MCF 10A (cell line): ENCODE measurements at regions of chr1 and their contacts with region 1.

Region 1: GRCh38 chr1:101520302-101520701 is 283.5 kb downstream of the S1PR1 start:
- DNase-seq: peak; percentile 65
- H3K4me3 Mint-ChIP-seq: no peak overlapping the region
- H3K27ac Mint-ChIP-seq: no peak overlapping the region
- H3K4me1 Mint-ChIP-seq: no peaks in the 10 kb centered on the region
- H3K27me3 Mint-ChIP-seq: peaks cover 48% of the 10 kb centered on the region
- CTCF ChIP-seq: peak; percentile 84

Region 2: DNA sequence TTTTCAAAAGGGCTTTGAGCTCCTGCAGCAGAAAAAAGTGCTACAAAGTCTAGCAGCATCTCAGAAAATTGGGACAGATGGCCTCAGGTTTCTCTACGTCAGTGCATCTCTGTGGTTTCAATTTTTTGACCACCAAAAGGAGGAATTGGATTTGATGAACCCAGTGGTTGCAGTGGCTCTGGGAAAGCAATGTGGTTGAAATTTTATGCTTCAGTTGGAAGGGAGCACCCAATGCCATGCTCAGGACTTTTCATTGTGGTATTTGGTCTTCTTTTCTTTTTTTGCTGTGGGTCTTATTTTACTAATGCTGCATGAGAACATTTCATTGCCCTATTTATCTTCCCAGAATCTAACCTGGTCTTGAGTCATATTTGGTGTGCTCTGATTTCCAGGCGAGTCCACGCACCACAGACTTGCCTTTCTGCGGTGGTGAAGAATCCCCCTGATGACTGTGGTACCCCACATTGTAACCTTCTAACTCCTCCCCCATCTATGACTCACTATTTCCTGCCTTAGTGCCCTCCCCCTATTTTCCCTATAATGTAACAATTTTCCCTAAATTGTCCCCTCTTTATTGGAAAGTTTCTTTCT is 226.7 kb before region 1 on chr1:
- CTCF ChIA-PET with region 1: no interaction called
- POLR2A ChIA-PET with region 1: no interaction called
- intact Hi-C with region 1: no loop called
- DNase-seq: no peak
- H3K4me3 Mint-ChIP-seq: no peak overlapping the region
- H3K27ac Mint-ChIP-seq: no peak overlapping the region
- H3K4me1 Mint-ChIP-seq: peaks cover 11% of the 10 kb centered on the region
- H3K27me3 Mint-ChIP-seq: peaks cover 11% of the 10 kb centered on the region
- CTCF ChIP-seq: no peak

Region 3: GRCh38 chr1:101465941-101466340 is 54.4 kb before region 1 on chr1:
- CTCF ChIA-PET with region 1: no interaction called
- POLR2A ChIA-PET with region 1: no interaction called
- intact Hi-C with region 1: no loop called
- DNase-seq: no peak
- H3K4me3 Mint-ChIP-seq: no peak overlapping the region
- H3K27ac Mint-ChIP-seq: no peak overlapping the region
- H3K4me1 Mint-ChIP-seq: no peaks in the 10 kb centered on the region
- H3K27me3 Mint-ChIP-seq: peaks cover 29% of the 10 kb centered on the region
- CTCF ChIP-seq: no peak

Region 4: DNA sequence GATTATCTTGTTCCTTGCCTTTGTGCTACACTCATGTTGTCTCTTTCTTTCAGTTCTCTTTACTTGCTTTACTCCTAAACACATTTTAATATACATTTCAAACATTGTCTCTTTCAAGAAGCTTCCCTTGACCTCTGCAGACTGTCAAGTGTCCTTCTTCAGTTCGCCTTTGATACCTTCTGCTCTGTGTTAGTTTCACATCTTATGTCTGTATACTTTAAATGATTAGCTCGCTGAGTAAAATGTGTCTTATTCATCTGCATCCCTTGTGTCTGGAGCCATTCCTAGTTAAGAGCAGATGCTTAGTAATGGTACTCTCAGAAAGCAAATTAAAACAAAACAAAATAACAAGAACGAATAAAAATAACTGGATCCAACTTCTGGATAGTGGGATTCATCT is 19.9 kb after region 1 on chr1:
- CTCF ChIA-PET with region 1: interaction called, 14 read pairs
- POLR2A ChIA-PET with region 1: no interaction called
- intact Hi-C with region 1: no loop called
- DNase-seq: no peak
- H3K4me3 Mint-ChIP-seq: no peak overlapping the region
- H3K27ac Mint-ChIP-seq: no peak overlapping the region
- H3K4me1 Mint-ChIP-seq: no peaks in the 10 kb centered on the region
- H3K27me3 Mint-ChIP-seq: peaks cover 54% of the 10 kb centered on the region
- CTCF ChIP-seq: no peak

Region 5: GRCh38 chr1:101653482-101653946 is 133.2 kb after region 1 on chr1:
- CTCF ChIA-PET with region 1: interaction called, 6 read pairs
- POLR2A ChIA-PET with region 1: no interaction called
- intact Hi-C with region 1: loop called (anchors 1 kb)
- DNase-seq: peak; percentile 56
- H3K4me3 Mint-ChIP-seq: no peak overlapping the region
- H3K27ac Mint-ChIP-seq: no peak overlapping the region
- H3K4me1 Mint-ChIP-seq: no peaks in the 10 kb centered on the region
- H3K27me3 Mint-ChIP-seq: peaks cover 74% of the 10 kb centered on the region
- CTCF ChIP-seq: peak; percentile 67

Region 6: GRCh38 chr1:102191723-102192122 is 671.4 kb after region 1 on chr1:
- CTCF ChIA-PET with region 1: interaction called, 16 read pairs
- POLR2A ChIA-PET with region 1: no interaction called
- intact Hi-C with region 1: loop called (anchors 1 kb)
- DNase-seq: peak; percentile 74
- H3K4me3 Mint-ChIP-seq: no peak overlapping the region
- H3K27ac Mint-ChIP-seq: no peak overlapping the region
- H3K4me1 Mint-ChIP-seq: no peaks in the 10 kb centered on the region
- H3K27me3 Mint-ChIP-seq: peaks cover 64% of the 10 kb centered on the region
- CTCF ChIP-seq: peak; percentile 35